CD4-positive, alpha-beta memory T cell (primary cell): ENCODE measurements at regions of chr1 and their contacts with region 1.

Region 1: DNA sequence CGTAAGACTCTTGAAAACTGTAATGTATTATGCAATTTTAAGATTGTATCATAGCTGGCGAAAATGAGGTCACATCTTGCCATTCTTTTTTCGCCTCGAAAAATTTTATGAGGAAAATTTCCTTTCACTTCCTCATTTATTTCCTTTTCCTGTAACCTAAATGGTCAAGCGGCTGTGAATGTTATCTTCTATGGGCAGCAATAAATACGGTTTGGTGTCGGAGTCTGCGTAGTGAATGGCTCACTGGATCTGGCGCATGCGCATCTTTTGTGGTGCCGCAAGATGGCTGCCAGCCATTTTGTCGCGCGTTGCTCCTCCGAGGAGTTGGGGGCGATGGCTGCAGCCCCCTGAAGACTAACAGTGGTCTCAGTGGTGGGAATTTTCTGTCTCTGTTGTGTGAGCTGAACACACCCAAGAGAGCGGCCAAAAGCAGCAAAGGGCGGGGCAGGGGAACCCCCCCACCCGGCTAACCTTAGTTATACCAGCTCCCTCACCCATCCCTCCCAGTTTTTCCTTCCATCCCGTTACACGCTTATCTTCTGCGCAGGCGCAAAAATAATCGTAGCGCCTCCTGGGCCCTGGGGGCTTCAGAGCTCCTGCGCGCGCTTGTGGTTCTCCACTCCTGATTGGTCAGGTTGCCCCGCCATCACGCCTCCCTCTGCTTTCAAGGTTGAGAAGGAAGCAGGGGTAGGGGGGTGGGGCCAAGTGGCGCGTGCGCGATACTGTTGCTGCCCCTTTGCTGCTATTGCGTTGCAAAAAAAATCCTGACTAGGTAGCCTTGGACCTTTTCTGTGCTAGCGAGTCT is at the start of gene RPRD2:
- DNase-seq: peak; percentile 99 to 100 (median 99)
- H3K4me3 ChIP-seq: peak within 1 kb of the TSS; percentile 98 to 100
- H3K4me3 Mint-ChIP-seq: peak within 1 kb of the TSS; percentile 94 to 100 (median 99)
- H3K27ac ChIP-seq: peak within 1 kb of the TSS; percentile 96
- H3K27ac Mint-ChIP-seq: peak within 1 kb of the TSS; percentile 97 to 100 (median 99)
- H3K4me1 ChIP-seq: peaks cover 27% of the 10 kb centered on the region
- H3K4me1 Mint-ChIP-seq: peaks cover 22 to 49% (median 28%) of the 10 kb centered on the region in 4 donors
- H3K27me3 ChIP-seq: no peaks in the 10 kb centered on the region
- H3K27me3 Mint-ChIP-seq: no peaks in the 10 kb centered on the region
- total RNA-seq, gene RPRD2: 60.0 to 61.0 TPM

Region 2: GRCh38 chr1:150268705-150269403 is 94.8 kb before region 1 on chr1 and contains the start of gene APH1A:
- CTCF ChIA-PET with region 1: no interaction called
- POLR2A ChIA-PET with region 1: interaction called, 19 read pairs
- intact Hi-C with region 1: no loop called
- DNase-seq: peak; percentile 89 to 93 (median 91)
- H3K4me3 ChIP-seq: peak within 1 kb of the TSS; percentile 83 to 85
- H3K4me3 Mint-ChIP-seq: peak within 1 kb of the TSS; percentile 92 to 99 (median 97)
- H3K27ac ChIP-seq: peak within 1 kb of the TSS; percentile 96
- H3K27ac Mint-ChIP-seq: peak within 1 kb of the TSS; percentile 96 to 99 (median 99)
- H3K4me1 ChIP-seq: peaks cover 24% of the 10 kb centered on the region
- H3K4me1 Mint-ChIP-seq: peaks cover 18 to 35% (median 27%) of the 10 kb centered on the region in 4 donors
- H3K27me3 ChIP-seq: no peaks in the 10 kb centered on the region
- H3K27me3 Mint-ChIP-seq: no peaks in the 10 kb centered on the region
- total RNA-seq, gene APH1A: 118 to 120 TPM

Region 3: GRCh38 chr1:150321826-150322166 is 41.8 kb before region 1 on chr1:
- CTCF ChIA-PET with region 1: interaction called, 3 read pairs
- POLR2A ChIA-PET with region 1: interaction called, 18 read pairs
- intact Hi-C with region 1: loop called (anchors 1 kb)
- DNase-seq: peak in 4 of 5 donors; percentile 19 to 53 (median 24)
- H3K4me3 ChIP-seq: peak overlapping the region; percentile 68 to 91
- H3K4me3 Mint-ChIP-seq: peak overlapping the region; percentile 95 to 100 (median 99)
- H3K27ac ChIP-seq: peak overlapping the region; percentile 81
- H3K27ac Mint-ChIP-seq: peak overlapping the region; percentile 95 to 100 (median 97)
- H3K4me1 ChIP-seq: peaks cover 23% of the 10 kb centered on the region
- H3K4me1 Mint-ChIP-seq: peaks cover 15 to 45% (median 30%) of the 10 kb centered on the region in 4 donors
- H3K27me3 ChIP-seq: no peaks in the 10 kb centered on the region
- H3K27me3 Mint-ChIP-seq: no peaks in the 10 kb centered on the region

Region 4: DNA sequence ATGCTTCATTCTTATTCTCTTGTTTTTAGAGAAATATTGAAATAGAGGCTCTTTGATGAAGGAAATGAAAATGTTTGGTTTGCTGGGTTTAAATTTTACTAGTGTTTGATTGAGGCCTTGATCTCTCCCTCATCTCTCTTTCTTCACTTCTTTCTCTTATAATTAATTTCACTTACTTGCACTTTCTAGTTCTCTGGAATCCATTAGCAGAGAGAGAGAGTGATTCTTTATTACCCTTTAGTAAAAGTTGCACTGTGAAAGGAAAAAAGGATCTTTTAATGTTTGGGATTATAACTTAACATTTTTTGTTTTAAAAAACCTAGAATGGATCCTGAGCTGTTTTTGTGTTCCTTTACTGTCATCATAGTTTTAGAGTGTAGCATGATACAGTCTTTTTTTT is 12.5 kb after region 1 on chr1:
- CTCF ChIA-PET with region 1: interaction called, 5 read pairs
- POLR2A ChIA-PET with region 1: interaction called, 39 read pairs
- intact Hi-C with region 1: no loop called
- DNase-seq: no peak
- H3K4me3 ChIP-seq: no peak overlapping the region
- H3K4me3 Mint-ChIP-seq: peak overlapping the region in 2 of 8 donors; percentile 7 to 60
- H3K27ac ChIP-seq: no peak overlapping the region
- H3K27ac Mint-ChIP-seq: peak overlapping the region in 2 of 7 donors; percentile 32 to 70
- H3K4me1 ChIP-seq: peaks cover 49% of the 10 kb centered on the region
- H3K4me1 Mint-ChIP-seq: peaks cover 40 to 67% (median 51%) of the 10 kb centered on the region in 4 donors
- H3K27me3 ChIP-seq: no peaks in the 10 kb centered on the region
- H3K27me3 Mint-ChIP-seq: no peaks in the 10 kb centered on the region

Region 5: DNA sequence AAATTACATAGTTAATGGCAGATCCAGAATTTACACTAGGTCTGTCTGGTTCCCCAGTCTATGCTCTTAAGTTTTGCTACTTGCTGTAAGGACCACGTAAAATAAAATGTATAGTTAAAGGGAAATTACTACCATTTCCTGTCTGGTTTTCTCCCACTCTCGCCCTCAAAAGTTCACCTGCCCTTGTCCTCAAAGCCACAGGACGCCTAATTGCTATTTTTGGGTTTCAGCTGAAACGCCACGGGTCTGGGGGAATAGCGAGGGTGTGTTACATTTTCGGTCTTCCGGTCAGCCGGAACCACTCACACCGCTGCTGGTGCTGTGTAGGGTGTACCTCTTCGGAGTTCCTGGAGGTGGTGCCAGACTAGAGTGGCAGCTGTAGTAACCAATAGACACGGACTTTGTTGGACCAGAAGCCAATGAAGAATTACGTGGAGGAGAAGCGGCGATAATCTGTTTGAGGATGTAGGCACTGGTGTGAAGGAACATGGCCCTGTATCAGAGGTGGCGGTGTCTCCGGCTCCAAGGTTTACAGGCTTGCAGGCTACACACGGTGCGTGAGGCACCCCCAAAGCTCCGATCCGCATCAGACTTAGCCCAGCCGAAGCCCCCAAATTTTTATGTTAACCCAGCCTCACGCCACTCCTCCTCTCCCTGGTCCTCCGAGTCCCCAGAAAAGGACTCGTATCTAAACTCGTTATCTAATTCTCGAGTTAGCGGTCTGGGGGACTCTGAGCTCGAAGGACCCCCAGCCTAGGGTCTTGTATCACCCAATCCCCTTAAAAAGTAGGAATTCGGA is 123.5 kb after region 1 on chr1 and contains the start of gene TARS2:
- CTCF ChIA-PET with region 1: no interaction called
- POLR2A ChIA-PET with region 1: interaction called, 11 read pairs
- intact Hi-C with region 1: loop called (anchors 10 kb)
- DNase-seq: peak; percentile 95 to 96 (median 96)
- H3K4me3 ChIP-seq: peak within 1 kb of the TSS; percentile 78 to 83
- H3K4me3 Mint-ChIP-seq: peak within 1 kb of the TSS; percentile 94 to 100 (median 98)
- H3K27ac ChIP-seq: peak within 1 kb of the TSS; percentile 77
- H3K27ac Mint-ChIP-seq: peak within 1 kb of the TSS; percentile 72 to 100 (median 99)
- H3K4me1 ChIP-seq: peaks cover 13% of the 10 kb centered on the region
- H3K4me1 Mint-ChIP-seq: peaks cover 9 to 26% (median 20%) of the 10 kb centered on the region in 4 donors
- H3K27me3 ChIP-seq: no peaks in the 10 kb centered on the region
- H3K27me3 Mint-ChIP-seq: no peaks in the 10 kb centered on the region
- total RNA-seq, gene TARS2: 32.3 to 35.4 TPM

Region 6: DNA sequence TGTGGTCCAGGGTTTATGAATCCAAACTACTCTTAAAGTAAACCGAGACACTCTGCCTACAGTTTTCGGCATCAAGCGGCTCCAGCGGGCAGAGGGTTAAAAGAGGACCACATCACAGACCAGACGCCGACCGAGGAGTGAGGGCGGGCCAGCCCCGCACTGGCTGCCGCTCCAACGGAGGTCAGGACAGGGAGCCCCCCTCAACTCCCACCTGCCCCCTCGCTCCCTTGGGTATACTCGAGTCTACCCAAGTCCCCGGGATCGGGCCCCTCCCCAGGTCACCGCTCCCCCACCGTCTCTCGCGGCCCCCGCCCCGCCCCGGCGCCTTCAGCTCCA is 512.5 kb after region 1 on chr1:
- CTCF ChIA-PET with region 1: no interaction called
- POLR2A ChIA-PET with region 1: no interaction called
- intact Hi-C with region 1: loop called (anchors 5 kb)
- DNase-seq: no peak
- H3K4me3 ChIP-seq: peak overlapping the region; percentile 60 to 93
- H3K4me3 Mint-ChIP-seq: peak overlapping the region; percentile 88 to 97 (median 95)
- H3K27ac ChIP-seq: peak overlapping the region; percentile 81
- H3K27ac Mint-ChIP-seq: peak overlapping the region; percentile 88 to 97 (median 95)
- H3K4me1 ChIP-seq: peaks cover 25% of the 10 kb centered on the region
- H3K4me1 Mint-ChIP-seq: peaks cover 23 to 47% (median 35%) of the 10 kb centered on the region in 4 donors
- H3K27me3 ChIP-seq: no peaks in the 10 kb centered on the region
- H3K27me3 Mint-ChIP-seq: no peaks in the 10 kb centered on the region